ENCODE measurements at regions of chr1 and their contacts with region 1.

Region 1: GRCh38 chr1:170010443-170010842 is 64.1 kb downstream of the KIFAP3 start:
- DNase-seq: peak in 1 of 2 donors; percentile 64
- ATAC-seq: no peak
- H3K4me3 ChIP-seq: no peak overlapping the region
- H3K27ac ChIP-seq: no peak overlapping the region
- H3K4me1 ChIP-seq: no peaks in the 10 kb centered on the region
- H3K27me3 ChIP-seq: no peaks in the 10 kb centered on the region
- CTCF ChIP-seq: peak in 8 of 9 donors; percentile 26 to 73 (median 56)

Region 2: GRCh38 chr1:170175056-170175455 is 164.6 kb after region 1 on chr1:
- intact Hi-C with region 1: no loop called
- DNase-seq: no peak
- ATAC-seq: no peak
- H3K4me3 ChIP-seq: no peak overlapping the region
- H3K27ac ChIP-seq: no peak overlapping the region
- H3K4me1 ChIP-seq: no peaks in the 10 kb centered on the region
- H3K27me3 ChIP-seq: no peaks in the 10 kb centered on the region
- CTCF ChIP-seq: no peak

Region 3: GRCh38 chr1:170537798-170538503 is 527.5 kb after region 1 on chr1:
- intact Hi-C with region 1: loop called in 1 of 10 experiments (anchors 5 kb)
- DNase-seq: no peak
- ATAC-seq: peak in 6 of 8 donors; percentile 34 to 82 (median 74)
- H3K4me3 ChIP-seq: no peak overlapping the region
- H3K27ac ChIP-seq: peak overlapping the region in 8 of 10 donors; percentile 34 to 82 (median 63)
- H3K4me1 ChIP-seq: peaks cover 0 to 45% (median 37%) of the 10 kb centered on the region in 9 donors
- H3K27me3 ChIP-seq: no peaks in the 10 kb centered on the region
- CTCF ChIP-seq: no peak